Transverse colon (tissue), 4 donors: ENCODE measurements at regions of chr2 and their contacts with region 1.

Region 1: DNA sequence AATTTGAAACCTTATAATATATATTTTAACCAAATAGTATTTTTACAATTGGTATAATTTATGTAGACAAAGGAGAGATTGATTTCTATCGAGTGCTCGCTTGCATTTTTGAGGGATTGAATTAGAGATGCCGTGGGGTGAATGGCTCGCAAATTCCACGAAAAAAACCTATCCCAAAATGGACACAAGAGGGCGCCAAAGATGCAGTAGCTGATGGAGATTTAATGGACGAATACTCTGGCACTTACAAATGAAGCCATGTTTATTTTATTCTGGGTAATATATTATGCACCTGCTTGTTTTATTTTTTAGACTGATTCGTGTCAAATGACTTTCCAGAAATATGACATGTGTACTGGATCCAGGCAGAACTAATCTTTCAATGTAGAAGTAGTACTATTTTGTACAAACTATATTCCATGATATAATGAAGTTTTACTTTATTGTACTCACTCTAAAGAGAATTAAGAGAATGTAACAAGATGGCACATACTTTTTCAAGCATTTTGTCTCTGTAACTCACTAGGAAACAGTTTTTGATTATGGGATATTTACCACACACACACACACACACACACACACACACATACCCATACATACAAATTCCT is 505.4 kb downstream of the PLCL1 start:
- DNase-seq: peak; percentile 73
- H3K4me3 ChIP-seq: no peak overlapping the region
- H3K27ac ChIP-seq: no peak overlapping the region
- H3K4me1 ChIP-seq: peaks cover 0 to 36% (median 13%) of the 10 kb centered on the region in 4 donors
- H3K27me3 ChIP-seq: no peaks in the 10 kb centered on the region
- CTCF ChIP-seq: peak; percentile 83 to 88 (median 85)
- EP300 ChIP-seq: no peak
- POLR2A ChIP-seq: no peak

Region 2: GRCh38 chr2:198188982-198189381 is 120.8 kb before region 1 on chr2:
- in situ Hi-C with region 1: no loop called
- intact Hi-C with region 1: no loop called
- DNase-seq: no peak
- H3K4me3 ChIP-seq: no peak overlapping the region
- H3K27ac ChIP-seq: no peak overlapping the region
- H3K4me1 ChIP-seq: no peaks in the 10 kb centered on the region
- H3K27me3 ChIP-seq: no peaks in the 10 kb centered on the region
- CTCF ChIP-seq: no peak
- EP300 ChIP-seq: no peak
- POLR2A ChIP-seq: no peak

Region 3: GRCh38 chr2:198774576-198774975 is 464.8 kb after region 1 on chr2:
- in situ Hi-C with region 1: loop called in 1 of 4 experiments (anchors 10 kb)
- intact Hi-C with region 1: no loop called
- DNase-seq: no peak
- H3K4me3 ChIP-seq: no peak overlapping the region
- H3K27ac ChIP-seq: peak overlapping the region; percentile 76 to 83 (median 78)
- H3K4me1 ChIP-seq: peaks cover 0 to 23% (median 16%) of the 10 kb centered on the region in 4 donors
- H3K27me3 ChIP-seq: no peaks in the 10 kb centered on the region
- CTCF ChIP-seq: no peak
- EP300 ChIP-seq: no peak
- POLR2A ChIP-seq: no peak

Region 4: GRCh38 chr2:198945496-198945895 is 635.7 kb after region 1 on chr2:
- in situ Hi-C with region 1: no loop called
- intact Hi-C with region 1: no loop called
- DNase-seq: no peak
- H3K4me3 ChIP-seq: no peak overlapping the region
- H3K27ac ChIP-seq: no peak overlapping the region
- H3K4me1 ChIP-seq: peaks cover 0 to 13% (median 0%) of the 10 kb centered on the region in 4 donors
- H3K27me3 ChIP-seq: no peaks in the 10 kb centered on the region
- CTCF ChIP-seq: no peak
- EP300 ChIP-seq: no peak
- POLR2A ChIP-seq: no peak

Region 5: DNA sequence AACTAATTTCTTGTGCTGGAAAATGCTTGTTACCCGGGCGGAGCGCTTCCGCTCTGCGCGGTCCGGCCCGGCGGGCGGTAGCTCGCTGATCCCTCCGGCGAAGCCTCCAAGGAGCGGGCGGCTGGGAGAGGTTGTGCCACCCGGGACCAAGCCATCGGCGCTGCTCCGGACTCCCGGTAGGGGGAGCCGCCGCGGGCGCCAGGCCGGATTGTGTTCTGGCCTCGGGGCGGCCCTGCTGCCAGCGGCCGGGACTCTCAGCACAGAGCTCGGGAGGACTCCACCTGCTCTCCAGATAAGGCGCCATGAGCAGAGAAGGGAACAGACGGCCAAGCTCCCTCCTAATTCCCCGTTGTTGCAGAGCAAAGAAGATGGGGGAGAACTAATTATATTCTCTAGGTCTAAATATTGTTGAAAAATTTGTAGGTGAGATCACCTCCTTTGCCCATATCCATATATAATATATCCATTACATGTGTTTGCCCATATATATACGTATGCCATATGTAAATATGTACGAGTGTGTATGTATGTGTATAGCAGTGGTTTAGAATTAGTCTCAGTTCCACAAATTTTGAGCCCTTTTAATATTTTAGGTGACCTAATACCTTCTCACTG is 1161.8 kb after region 1 on chr2:
- in situ Hi-C with region 1: loop called in 3 of 4 experiments (anchors 10 to 25 kb)
- intact Hi-C with region 1: no loop called
- DNase-seq: peak; percentile 83
- H3K4me3 ChIP-seq: peak overlapping the region in 3 of 4 donors; percentile 25 to 98 (median 40)
- H3K27ac ChIP-seq: peak overlapping the region; percentile 83 to 90 (median 87)
- H3K4me1 ChIP-seq: peaks cover 0 to 38% (median 24%) of the 10 kb centered on the region in 4 donors
- H3K27me3 ChIP-seq: peaks cover 81% of the 10 kb centered on the region
- CTCF ChIP-seq: peak; percentile 68 to 88 (median 75)
- EP300 ChIP-seq: no peak
- POLR2A ChIP-seq: peak; percentile 54

Region 6: DNA sequence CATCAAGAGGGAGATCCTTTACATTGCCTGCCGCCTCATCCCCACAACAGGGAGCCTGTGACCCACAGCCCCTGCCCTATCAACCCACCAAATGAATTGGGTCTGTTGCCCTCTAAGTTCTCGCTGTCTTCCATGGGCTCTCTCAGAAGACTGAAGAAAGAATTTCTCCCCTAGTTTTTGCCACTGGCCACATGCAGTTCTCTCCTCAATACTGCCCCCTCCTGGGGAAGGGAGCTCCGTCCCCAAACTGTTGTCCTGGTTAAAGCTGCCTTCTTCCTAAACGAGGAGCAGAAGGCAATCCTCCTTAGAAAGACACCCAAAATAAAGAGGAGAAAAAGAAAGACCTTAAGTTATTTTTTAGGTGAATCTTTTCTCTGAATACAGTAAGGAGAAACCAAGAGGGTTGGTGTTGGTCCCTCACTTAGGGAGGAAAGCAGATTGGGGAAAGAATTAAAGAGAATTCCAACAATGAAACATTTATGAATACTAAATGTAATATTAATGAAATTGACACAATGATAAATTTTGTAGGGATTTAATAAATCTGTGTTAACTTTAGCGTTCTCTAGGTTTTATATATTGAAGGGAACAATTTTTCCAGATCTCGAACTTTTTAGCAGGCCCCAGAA is 1179.1 kb after region 1 on chr2:
- in situ Hi-C with region 1: loop called in 2 of 4 experiments (anchors 25 kb)
- intact Hi-C with region 1: no loop called
- DNase-seq: peak; percentile 68
- H3K4me3 ChIP-seq: no peak overlapping the region
- H3K27ac ChIP-seq: no peak overlapping the region
- H3K4me1 ChIP-seq: peaks cover 0 to 3% (median 0%) of the 10 kb centered on the region in 4 donors
- H3K27me3 ChIP-seq: peaks cover 4% of the 10 kb centered on the region
- CTCF ChIP-seq: peak; percentile 53 to 70 (median 59)
- EP300 ChIP-seq: no peak
- POLR2A ChIP-seq: no peak

Region 7: DNA sequence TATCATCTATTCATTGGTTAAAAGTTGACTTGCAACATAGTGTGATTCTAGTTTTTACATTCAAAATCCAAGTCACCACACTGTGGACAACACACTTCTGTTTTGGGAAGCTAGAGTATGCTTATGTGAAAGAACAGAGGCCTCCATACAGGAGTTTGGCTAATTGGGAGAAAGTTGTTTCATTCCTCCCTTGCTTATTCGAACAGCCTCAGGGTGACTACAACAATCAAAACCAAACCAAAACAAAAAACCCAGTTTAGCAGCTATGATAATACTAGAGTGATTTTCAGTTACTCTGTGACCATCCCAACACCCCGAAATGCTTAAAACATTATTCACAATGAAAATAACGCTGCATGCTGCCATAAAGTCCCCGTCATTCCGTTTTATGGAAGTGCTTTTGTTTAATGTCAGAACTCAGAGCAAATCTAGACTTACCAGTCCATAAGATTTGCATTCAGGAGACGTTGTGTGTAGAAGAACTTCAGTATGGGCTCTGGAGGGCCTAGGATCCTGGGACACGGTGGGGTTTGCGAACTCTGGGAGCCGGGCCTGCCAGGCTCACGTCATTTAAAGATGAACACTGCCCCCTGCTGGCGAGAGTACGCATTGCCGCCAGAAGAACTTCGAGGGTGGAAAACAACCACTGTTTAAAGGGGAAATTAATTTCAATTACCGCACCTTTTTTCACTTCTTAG is 1429.8 kb after region 1 on chr2:
- in situ Hi-C with region 1: loop called in 3 of 4 experiments (anchors 10 to 25 kb)
- intact Hi-C with region 1: no loop called
- DNase-seq: peak; percentile 85
- H3K4me3 ChIP-seq: peak overlapping the region in 2 of 4 donors; percentile 1 to 21
- H3K27ac ChIP-seq: peak overlapping the region; percentile 27 to 62 (median 57)
- H3K4me1 ChIP-seq: peaks cover 6 to 26% (median 21%) of the 10 kb centered on the region in 4 donors
- H3K27me3 ChIP-seq: no peaks in the 10 kb centered on the region
- CTCF ChIP-seq: peak; percentile 92 to 98 (median 96)
- EP300 ChIP-seq: no peak
- POLR2A ChIP-seq: no peak

Region 8: GRCh38 chr2:199850718-199851500 is 1541.1 kb after region 1 on chr2 and contains the start of gene FTCDNL1:
- in situ Hi-C with region 1: loop called in 1 of 4 experiments (anchors 25 kb)
- intact Hi-C with region 1: no loop called
- DNase-seq: peak; percentile 81
- H3K4me3 ChIP-seq: peak within 1 kb of the TSS; percentile 55 to 77 (median 66)
- H3K27ac ChIP-seq: peak within 1 kb of the TSS; percentile 66 to 79 (median 68)
- H3K4me1 ChIP-seq: peaks cover 0 to 12% (median 8%) of the 10 kb centered on the region in 4 donors
- H3K27me3 ChIP-seq: no peaks in the 10 kb centered on the region
- CTCF ChIP-seq: peak; percentile 44 to 63 (median 49)
- EP300 ChIP-seq: no peak
- POLR2A ChIP-seq: no peak
- total RNA-seq, gene FTCDNL1: 1.8 to 2.7 TPM in 2 of 4 donors, not detected in the others